ENCODE measurements at regions of chr16 and their contacts with region 1.

Region 1: DNA sequence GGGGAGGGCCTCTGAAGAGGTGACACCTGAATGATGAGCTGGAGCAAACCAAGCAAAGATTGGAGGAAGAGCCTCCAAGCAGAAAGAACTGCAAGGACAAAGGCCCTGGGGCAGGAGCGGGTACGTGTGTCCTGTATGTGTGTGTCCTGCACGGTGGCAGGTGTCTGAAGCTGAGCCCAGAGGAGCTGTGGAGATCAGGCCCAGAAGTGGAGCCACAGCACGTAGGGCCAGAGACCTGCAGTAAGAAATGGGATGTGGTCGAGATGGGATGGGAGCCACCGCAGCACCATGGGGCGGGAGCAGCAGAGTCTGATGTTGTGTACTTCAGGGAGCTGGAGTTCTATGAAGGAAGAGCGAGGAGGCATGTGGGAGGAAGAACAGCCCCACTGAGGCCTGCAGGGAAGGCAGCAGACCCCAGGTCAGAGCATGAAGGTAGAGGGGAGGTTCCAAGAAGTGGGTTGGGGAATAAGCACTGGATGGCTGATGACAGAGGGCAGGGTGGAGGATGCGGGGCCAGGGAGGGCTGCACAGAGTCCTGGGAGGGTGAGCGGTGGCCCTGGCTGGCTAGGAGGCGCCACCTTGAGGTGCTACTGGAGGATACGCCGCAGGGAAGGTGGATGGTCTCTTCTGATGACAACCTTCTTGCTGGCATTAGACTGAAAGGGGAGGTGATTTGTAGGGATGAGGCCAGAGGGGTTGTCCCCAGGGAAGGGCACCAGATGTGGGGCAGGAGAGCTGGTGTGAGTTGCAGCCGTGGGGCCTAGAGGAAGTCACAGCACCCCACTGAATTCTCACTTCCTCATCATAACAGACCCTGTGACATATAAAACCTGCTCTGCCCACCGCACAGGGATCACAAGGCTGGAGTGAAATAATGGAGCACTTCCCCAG is 10.6 kb upstream of the CETP start:
- DNase-seq: peak; percentile 66
- CTCF ChIP-seq: peak; percentile 79

Region 2: DNA sequence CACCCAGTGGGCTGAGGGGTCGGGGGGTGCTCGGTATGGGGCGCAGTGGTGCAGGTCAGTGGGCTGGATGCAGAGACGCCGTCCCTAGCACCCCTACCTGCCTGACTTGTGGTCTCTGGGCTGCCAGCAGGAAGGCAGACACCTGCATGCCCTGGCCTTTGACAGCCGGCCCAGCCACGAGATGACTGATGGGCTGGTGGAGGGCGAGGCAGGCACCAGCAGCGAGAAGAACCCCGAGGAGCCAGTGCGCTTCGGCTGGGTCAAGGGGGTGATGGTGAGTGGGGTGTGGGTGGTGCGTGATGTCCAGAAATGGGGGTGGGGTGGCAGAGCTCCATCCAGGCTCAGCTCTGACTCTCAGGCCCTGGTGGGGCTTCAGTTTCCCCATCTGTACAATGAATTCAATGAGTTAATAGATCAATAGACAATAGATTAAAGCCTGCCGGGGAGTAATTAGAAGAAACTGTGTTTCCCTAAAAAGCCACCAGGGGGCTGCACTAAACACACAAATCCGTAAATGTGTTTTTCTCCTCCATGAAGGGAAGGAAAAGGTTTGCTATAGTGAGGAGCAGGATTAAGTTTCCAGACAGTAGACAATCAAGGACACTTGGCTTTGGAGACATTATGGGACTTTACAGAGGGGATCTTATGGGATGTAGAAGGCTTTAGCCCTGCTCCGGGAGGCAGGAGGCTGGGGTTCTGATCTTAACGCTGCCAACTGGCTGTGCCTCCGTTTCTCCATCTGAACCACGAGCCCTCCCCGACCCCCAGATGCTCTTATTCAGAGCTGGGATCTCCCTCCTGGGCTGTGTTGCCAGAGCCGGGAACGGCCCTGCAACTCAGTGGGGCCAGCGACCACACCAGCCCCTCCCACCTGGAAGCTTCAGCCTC is 83.9 kb before region 1 on chr16:
- in situ Hi-C with region 1: loop called (anchors 10 kb)
- DNase-seq: peak; percentile 72
- CTCF ChIP-seq: peak; percentile 56